AG04450 (cell line): ENCODE measurements at regions of chr4 and their contacts with region 1.

Region 1: GRCh38 chr4:145609481-145610427 is 9.4 kb upstream of the MMAA start:
- DNase-seq: no peak
- H3K4me3 ChIP-seq: no peak overlapping the region
- H3K27ac ChIP-seq: no peak overlapping the region
- H3K27me3 ChIP-seq: no peaks in the 10 kb centered on the region
- CTCF ChIP-seq: peak; percentile 86

Region 2: GRCh38 chr4:145154573-145154972 is 455.2 kb before region 1 on chr4:
- CTCF ChIA-PET with region 1: interaction called, 10 read pairs
- POLR2A ChIA-PET with region 1: no interaction called
- DNase-seq: no peak
- H3K4me3 ChIP-seq: no peak overlapping the region
- H3K27ac ChIP-seq: no peak overlapping the region
- H3K27me3 ChIP-seq: no peaks in the 10 kb centered on the region
- CTCF ChIP-seq: peak; percentile 59

Region 3: DNA sequence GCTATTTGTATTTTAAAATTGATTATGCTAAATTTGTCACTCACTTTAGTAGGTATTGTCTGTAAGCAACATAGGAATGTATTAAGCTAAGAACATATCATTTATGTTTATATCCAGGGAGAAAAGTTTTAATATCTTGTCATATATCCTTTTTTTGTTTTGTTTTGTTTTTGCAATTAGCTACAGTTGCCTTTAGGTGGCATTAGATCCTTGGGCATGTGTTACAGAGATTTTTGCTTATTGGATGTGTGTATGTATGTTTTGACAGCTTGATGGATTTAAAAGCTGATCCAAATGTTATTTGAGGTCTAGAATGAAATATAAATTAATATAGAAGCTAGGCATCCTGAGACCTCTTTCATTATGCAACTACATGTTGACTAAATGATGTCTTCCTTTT is 393.2 kb before region 1 on chr4:
- CTCF ChIA-PET with region 1: interaction called, 140 read pairs
- POLR2A ChIA-PET with region 1: no interaction called
- DNase-seq: no peak
- H3K4me3 ChIP-seq: no peak overlapping the region
- H3K27ac ChIP-seq: no peak overlapping the region
- H3K27me3 ChIP-seq: no peaks in the 10 kb centered on the region
- CTCF ChIP-seq: peak; percentile 78

Region 4: GRCh38 chr4:145266881-145267280 is 342.9 kb before region 1 on chr4:
- CTCF ChIA-PET with region 1: interaction called, 10 read pairs
- POLR2A ChIA-PET with region 1: no interaction called
- DNase-seq: no peak
- H3K4me3 ChIP-seq: no peak overlapping the region
- H3K27ac ChIP-seq: no peak overlapping the region
- H3K27me3 ChIP-seq: no peaks in the 10 kb centered on the region
- CTCF ChIP-seq: no peak

Region 5: GRCh38 chr4:145557720-145558119 is 52.0 kb before region 1 on chr4:
- CTCF ChIA-PET with region 1: interaction called, 15 read pairs
- POLR2A ChIA-PET with region 1: no interaction called
- DNase-seq: peak; percentile 43
- H3K4me3 ChIP-seq: no peak overlapping the region
- H3K27ac ChIP-seq: no peak overlapping the region
- H3K27me3 ChIP-seq: no peaks in the 10 kb centered on the region
- CTCF ChIP-seq: peak; percentile 99